Endothelial cell of umbilical vein (primary cell): ENCODE measurements at regions of chr2 and their contacts with region 1.

Region 1: GRCh38 chr2:61065715-61066709 is at the start of gene SANBR:
- DNase-seq: peak; percentile 87
- H3K4me3 ChIP-seq: peak within 1 kb of the TSS; percentile 82 to 99 (median 93)
- H3K27ac ChIP-seq: peak within 1 kb of the TSS; percentile 55
- H3K4me1 ChIP-seq: peaks cover 9% of the 10 kb centered on the region
- H3K27me3 ChIP-seq: no peaks in the 10 kb centered on the region
- CTCF ChIP-seq: no peak
- POLR2A ChIP-seq: peak; percentile 68
- total RNA-seq, gene SANBR: 22.9 and 23.8 TPM in 2 replicates

Region 2: DNA sequence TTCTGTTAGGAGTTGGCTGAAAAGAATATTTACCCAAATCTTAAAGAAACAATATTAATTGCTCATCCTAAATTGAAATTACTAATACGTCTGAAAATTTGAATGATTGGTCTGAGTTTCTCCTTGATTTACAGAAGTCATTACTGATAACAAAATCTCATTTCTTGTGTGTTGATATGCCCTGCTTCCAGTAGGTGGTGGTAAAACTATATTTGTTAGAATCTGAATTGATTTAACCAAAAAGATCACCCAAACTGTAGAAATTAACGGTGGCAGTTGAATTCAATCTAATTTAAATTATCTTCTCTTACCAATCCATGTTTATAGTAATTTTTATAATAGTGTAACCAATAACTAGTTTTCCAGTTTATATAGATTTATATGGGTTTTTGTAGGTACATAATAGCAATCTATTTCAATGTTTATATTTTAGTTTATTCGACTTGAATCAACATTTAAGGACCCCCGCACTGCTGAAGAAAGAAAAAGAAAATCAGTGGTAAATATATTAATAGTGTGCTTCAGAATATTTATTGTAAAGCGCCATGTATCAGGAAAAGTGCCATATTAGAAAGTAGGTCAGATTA is 271.6 kb before region 1 on chr2:
- CTCF ChIA-PET with region 1: no interaction called
- POLR2A ChIA-PET with region 1: no interaction called
- dilution Hi-C with region 1: no loop called
- intact Hi-C with region 1: loop called (anchors 10 kb)
- DNase-seq: peak; percentile 46
- H3K4me3 ChIP-seq: no peak overlapping the region
- H3K27ac ChIP-seq: no peak overlapping the region
- H3K4me1 ChIP-seq: peaks cover 21% of the 10 kb centered on the region
- H3K27me3 ChIP-seq: no peaks in the 10 kb centered on the region
- CTCF ChIP-seq: peak; percentile 23 to 25
- POLR2A ChIP-seq: no peak

Region 3: DNA sequence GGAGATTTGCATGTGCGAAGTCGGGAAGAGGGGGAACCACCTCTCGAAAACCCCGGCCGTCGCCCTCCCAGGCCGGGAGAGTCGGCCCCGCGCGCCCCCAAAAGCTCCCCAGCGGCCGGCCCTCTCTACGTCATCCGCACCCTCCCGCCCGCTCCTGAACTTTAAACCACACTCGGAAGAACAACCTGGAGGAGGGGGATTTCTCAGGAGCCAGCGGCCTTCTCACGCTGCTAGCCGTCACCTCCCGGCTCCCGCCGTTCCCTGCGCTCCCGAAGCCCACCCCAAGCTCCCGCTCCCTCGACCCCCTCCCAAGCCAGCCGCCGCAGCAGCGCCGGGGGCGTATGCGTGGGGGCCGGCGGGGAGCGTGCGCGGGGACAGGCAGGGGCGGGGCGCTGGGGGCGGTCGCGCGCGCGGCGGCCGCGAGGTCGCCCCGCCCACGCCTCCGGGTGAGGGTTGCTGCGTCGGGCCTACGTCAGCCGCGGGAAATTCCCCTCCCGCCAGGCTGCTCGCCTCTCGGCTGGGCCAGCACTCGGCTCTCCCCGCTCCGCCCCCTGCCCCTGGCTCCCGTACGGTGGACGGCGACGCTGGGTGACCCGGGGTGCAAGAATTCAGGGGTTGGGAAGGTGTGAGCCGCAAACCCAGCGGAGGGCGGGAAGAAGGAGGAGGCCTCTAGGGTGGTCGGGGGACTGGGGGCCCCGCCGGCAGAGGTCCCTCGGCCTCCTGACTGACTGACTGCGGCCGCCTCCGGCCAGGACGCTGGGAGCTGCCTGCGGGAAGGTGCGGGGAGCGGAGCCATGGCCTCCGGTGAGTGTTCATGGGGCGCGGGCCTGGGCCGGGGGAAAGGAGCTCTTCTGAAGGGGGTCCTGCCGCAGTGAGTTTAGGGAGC is 184.7 kb before region 1 on chr2 and contains the start of gene REL:
- CTCF ChIA-PET with region 1: no interaction called
- POLR2A ChIA-PET with region 1: no interaction called
- dilution Hi-C with region 1: no loop called
- intact Hi-C with region 1: loop called (anchors 5 kb)
- DNase-seq: peak; percentile 90
- H3K4me3 ChIP-seq: peak within 1 kb of the TSS; percentile 94 to 99 (median 98)
- H3K27ac ChIP-seq: peak within 1 kb of the TSS; percentile 94
- H3K4me1 ChIP-seq: peaks cover 33% of the 10 kb centered on the region
- H3K27me3 ChIP-seq: no peaks in the 10 kb centered on the region
- CTCF ChIP-seq: peak in 1 of 2 donors; percentile 5
- POLR2A ChIP-seq: no peak
- total RNA-seq, gene REL: 11.7 and 12.8 TPM in 2 replicates

Region 4: DNA sequence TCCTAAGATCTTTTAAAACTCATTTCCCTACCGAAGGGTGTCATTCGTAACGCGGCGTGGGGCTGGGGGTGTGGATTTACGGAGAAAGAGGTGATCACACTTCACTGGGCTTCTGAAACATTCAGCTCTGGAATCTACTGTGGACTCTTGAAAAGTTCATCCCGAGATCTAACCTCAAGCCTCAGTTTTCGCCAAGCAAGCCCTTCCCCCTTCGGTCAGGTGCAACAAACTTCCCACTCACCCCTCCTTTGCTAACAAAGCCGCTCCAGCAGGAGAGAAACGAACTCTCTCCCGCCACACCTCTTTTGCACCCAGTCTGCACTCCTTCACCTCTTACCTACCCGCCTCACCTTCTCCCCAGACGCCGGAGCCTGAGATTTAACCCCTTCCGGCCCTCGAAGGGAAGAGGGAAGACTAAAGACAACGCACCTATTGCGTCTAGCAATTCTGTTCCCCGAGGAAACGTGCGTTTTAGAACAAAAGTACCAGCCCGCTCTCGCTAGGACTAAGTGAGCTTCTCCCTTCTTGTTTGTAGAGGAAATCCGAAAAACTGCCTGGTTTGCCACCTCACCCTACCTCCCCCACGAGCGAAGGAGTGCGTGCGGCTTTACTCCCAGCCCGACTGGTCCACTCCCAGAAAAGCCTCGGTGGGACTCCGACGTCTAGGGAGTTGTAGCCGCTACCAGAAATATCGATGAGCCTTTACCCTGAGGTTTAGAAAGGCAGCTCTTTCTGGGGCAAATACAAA is 49.0 kb before region 1 on chr2:
- CTCF ChIA-PET with region 1: no interaction called
- POLR2A ChIA-PET with region 1: no interaction called
- dilution Hi-C with region 1: no loop called
- intact Hi-C with region 1: loop called (anchors 1 kb)
- DNase-seq: no peak
- H3K4me3 ChIP-seq: peak overlapping the region; percentile 73 to 98 (median 94)
- H3K27ac ChIP-seq: peak overlapping the region; percentile 67
- H3K4me1 ChIP-seq: peaks cover 22% of the 10 kb centered on the region
- H3K27me3 ChIP-seq: no peaks in the 10 kb centered on the region
- CTCF ChIP-seq: no peak
- POLR2A ChIP-seq: no peak

Region 5: DNA sequence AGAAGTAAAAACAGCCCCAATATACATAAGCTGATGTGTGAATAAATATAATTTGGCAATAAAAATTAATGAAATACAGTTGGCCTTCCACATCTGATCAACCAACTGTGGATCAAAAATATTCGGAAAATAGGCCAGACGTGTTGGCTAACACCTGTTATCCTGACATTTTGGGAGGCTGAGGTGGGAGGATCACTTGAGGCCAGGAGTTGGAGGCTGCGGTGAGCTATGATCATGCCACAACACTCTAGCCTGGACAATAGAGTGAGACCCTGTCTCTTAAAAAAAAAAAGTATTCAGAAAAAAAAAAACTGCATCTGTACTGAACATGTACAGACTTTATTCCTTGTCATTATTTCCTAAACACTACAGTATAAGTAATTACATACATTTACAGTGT is 36.5 kb before region 1 on chr2:
- CTCF ChIA-PET with region 1: no interaction called
- POLR2A ChIA-PET with region 1: no interaction called
- dilution Hi-C with region 1: no loop called
- intact Hi-C with region 1: no loop called
- DNase-seq: no peak
- H3K4me3 ChIP-seq: no peak overlapping the region
- H3K27ac ChIP-seq: no peak overlapping the region
- H3K4me1 ChIP-seq: no peaks in the 10 kb centered on the region
- H3K27me3 ChIP-seq: no peaks in the 10 kb centered on the region
- CTCF ChIP-seq: no peak
- POLR2A ChIP-seq: no peak

Region 6: GRCh38 chr2:61176755-61177726 is 111.0 kb after region 1 on chr2:
- CTCF ChIA-PET with region 1: no interaction called
- POLR2A ChIA-PET with region 1: no interaction called
- dilution Hi-C with region 1: no loop called
- intact Hi-C with region 1: loop called (anchors 5 kb)
- DNase-seq: peak; percentile 94
- H3K4me3 ChIP-seq: peak overlapping the region; percentile 42 to 82 (median 61)
- H3K27ac ChIP-seq: peak overlapping the region; percentile 71
- H3K4me1 ChIP-seq: peaks cover 32% of the 10 kb centered on the region
- H3K27me3 ChIP-seq: peaks cover 0 to 2% of the 10 kb centered on the region in 2 experiments
- CTCF ChIP-seq: peak in 1 of 2 donors; percentile 7
- POLR2A ChIP-seq: peak; percentile 95

Region 7: DNA sequence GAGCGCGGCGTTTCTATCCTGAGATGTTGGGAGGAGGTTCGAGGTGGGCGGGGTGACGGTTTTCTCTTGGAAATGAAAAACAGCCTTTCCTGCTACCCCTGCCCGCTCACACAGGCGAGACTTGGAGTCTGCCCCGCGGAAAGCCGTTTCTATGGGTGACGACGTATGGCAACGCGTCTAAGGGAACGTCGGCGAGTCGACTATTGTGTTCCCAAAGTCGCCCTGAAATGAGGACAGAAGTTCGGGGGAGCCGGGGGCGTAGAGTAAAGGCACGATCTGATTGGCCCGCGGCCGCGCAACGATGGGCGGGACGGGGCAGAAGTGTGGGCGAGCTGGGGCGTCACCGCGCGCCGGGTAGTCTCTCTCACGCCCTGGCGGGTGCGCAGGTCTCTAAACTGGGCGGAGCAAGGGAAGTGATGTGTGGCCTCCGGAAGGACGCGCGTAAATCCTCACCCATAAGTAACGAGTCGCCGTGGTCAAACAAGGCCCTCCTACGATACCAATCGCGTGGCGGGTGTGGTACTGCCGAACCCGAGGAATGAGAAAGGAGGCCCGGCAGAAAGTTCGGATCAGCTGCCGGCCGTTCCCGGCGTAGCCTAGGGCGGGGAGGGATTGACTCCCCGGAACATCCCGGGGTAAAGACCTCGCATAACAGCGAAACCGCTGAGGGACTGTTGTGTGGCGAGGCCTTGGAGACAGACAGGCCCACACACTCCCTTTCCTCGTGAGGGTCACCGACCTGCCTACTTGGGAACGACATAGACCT is 698.2 kb after region 1 on chr2:
- CTCF ChIA-PET with region 1: no interaction called
- POLR2A ChIA-PET with region 1: no interaction called
- dilution Hi-C with region 1: no loop called
- intact Hi-C with region 1: loop called (anchors 10 kb)
- DNase-seq: peak; percentile 99
- H3K4me3 ChIP-seq: peak overlapping the region; percentile 45 to 84 (median 53)
- H3K27ac ChIP-seq: peak overlapping the region; percentile 99
- H3K4me1 ChIP-seq: peaks cover 9% of the 10 kb centered on the region
- H3K27me3 ChIP-seq: peaks cover 0 to 2% of the 10 kb centered on the region in 2 experiments
- CTCF ChIP-seq: peak in 1 of 2 donors; percentile 1
- POLR2A ChIP-seq: peak; percentile 61